ENCODE measurements at regions of chr1 and their contacts with region 1.

Region 1: GRCh38 chr1:52127181-52128180 is 14.4 kb upstream of the ZFYVE9 start:
- DNase-seq: peak; percentile 54
- H3K4me3 ChIP-seq: no peak overlapping the region
- H3K27ac ChIP-seq: no peak overlapping the region
- H3K4me1 ChIP-seq: peaks cover 5% of the 10 kb centered on the region
- H3K27me3 ChIP-seq: no peaks in the 10 kb centered on the region
- CTCF ChIP-seq: peak; percentile 77 to 86

Region 2: GRCh38 chr1:52296345-52296744 is 168.9 kb after region 1 on chr1:
- CTCF ChIA-PET with region 1: interaction called, 4 read pairs
- dilution Hi-C with region 1: no loop called
- in situ Hi-C with region 1: loop called (anchors 5 to 10 kb)
- intact Hi-C with region 1: loop called (anchors 1 kb)
- DNase-seq: peak; percentile 59
- H3K4me3 ChIP-seq: no peak overlapping the region
- H3K27ac ChIP-seq: no peak overlapping the region
- H3K4me1 ChIP-seq: no peaks in the 10 kb centered on the region
- H3K27me3 ChIP-seq: no peaks in the 10 kb centered on the region
- CTCF ChIP-seq: peak; percentile 67 to 84

Region 3: GRCh38 chr1:52348704-52349300 is 221.3 kb after region 1 on chr1:
- CTCF ChIA-PET with region 1: interaction called, 4 read pairs
- dilution Hi-C with region 1: no loop called
- in situ Hi-C with region 1: no loop called
- intact Hi-C with region 1: loop called (anchors 1 kb)
- DNase-seq: peak; percentile 28
- H3K4me3 ChIP-seq: no peak overlapping the region
- H3K27ac ChIP-seq: no peak overlapping the region
- H3K4me1 ChIP-seq: peaks cover 5% of the 10 kb centered on the region
- H3K27me3 ChIP-seq: no peaks in the 10 kb centered on the region
- CTCF ChIP-seq: peak; percentile 25 to 56

Region 4: GRCh38 chr1:52662645-52663313 is 535.3 kb after region 1 on chr1:
- CTCF ChIA-PET with region 1: no interaction called
- dilution Hi-C with region 1: no loop called
- in situ Hi-C with region 1: no loop called
- intact Hi-C with region 1: loop called (anchors 5 kb)
- DNase-seq: peak; percentile 96
- H3K4me3 ChIP-seq: no peak overlapping the region
- H3K27ac ChIP-seq: peak overlapping the region; percentile 72
- H3K4me1 ChIP-seq: peaks cover 57% of the 10 kb centered on the region
- H3K27me3 ChIP-seq: no peaks in the 10 kb centered on the region
- CTCF ChIP-seq: peak in 1 of 2 donors; percentile 17